ENCODE measurements at regions of chr14 and their contacts with region 1.

Region 1: DNA sequence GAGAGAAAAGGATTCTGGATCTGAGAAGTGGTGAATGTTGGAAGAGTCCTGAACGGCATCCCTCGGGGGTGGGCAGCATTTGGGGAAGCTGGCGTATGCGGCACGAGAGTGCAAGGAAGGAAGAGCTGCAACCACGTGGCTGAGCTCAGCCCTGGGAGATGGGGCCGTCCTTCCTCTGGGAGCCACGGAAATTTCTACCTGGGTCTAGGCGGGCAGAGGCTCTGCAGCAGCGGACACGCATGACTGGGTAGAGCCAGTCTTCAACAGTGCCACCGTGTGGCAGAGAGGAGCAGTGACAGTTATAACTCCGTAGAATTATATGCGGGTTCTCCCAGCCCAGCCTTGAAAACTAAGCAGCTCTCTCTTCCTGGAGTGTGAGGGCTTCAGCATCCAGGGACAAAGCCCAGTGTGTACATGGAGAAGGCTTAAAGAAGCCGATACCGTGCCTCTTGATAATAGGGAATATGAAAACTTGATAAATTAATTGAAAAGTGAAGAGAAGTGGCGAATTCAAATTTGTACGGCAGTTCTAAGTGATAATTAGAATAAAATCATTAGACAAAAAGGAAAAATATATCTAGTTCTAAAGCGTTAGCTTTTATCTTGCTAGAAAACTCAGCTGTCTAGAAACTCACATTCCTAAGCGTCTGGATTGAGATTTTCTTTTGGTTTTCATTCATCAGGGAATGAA is 82.9 kb upstream of the STXBP6 start:
- DNase-seq: peak; percentile 62 to 68 (median 64)
- ATAC-seq: peak; percentile 100
- H3K4me3 ChIP-seq: no peak overlapping the region
- H3K4me1 ChIP-seq: no peaks in the 10 kb centered on the region
- CTCF ChIP-seq: peak; percentile 63

Region 2: DNA sequence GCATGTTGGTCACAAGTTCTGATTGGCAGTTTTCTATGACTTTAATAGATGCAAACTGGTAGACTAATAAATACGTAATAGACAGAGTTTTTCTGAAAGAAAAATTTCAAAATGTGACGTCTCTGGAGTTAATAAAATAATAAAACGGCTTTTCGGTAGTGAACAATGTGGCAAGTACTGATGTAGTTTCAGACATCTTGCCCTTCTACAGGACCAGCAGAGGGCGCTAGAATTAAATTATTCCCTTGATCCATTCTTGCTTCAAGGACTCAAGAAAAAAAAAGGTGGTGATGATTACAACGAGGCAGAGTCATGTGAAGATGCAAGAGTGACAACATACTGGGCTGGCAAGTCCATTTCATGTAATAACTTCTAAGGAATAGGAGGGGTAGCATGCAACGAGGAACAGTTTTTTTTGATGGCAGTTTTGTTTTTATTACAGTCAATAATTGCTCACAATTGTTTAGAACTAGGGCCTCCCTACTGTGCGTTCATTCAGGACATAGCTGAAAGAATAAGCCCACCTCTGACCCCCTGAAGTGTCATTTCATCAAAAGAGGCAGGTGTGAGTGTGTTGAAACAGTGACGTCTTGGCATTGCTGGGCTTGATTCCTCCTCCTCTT is 397.9 kb before region 1 on chr14:
- intact Hi-C with region 1: loop called in 1 of 2 experiments (anchors 5 kb)
- DNase-seq: peak in 1 of 3 donors; percentile 81
- ATAC-seq: peak; percentile 75
- H3K4me3 ChIP-seq: no peak overlapping the region
- H3K4me1 ChIP-seq: no peaks in the 10 kb centered on the region
- CTCF ChIP-seq: peak; percentile 50

Region 3: GRCh38 chr14:24806061-24806678 is 326.7 kb before region 1 on chr14:
- intact Hi-C with region 1: loop called in 1 of 2 experiments (anchors 10 kb)
- DNase-seq: peak; percentile 67 to 96 (median 84)
- ATAC-seq: peak; percentile 94
- H3K4me3 ChIP-seq: no peak overlapping the region
- H3K4me1 ChIP-seq: peaks cover 4% of the 10 kb centered on the region
- CTCF ChIP-seq: peak; percentile 68

Region 4: GRCh38 chr14:24911324-24912109 is 221.4 kb before region 1 on chr14:
- intact Hi-C with region 1: no loop called
- DNase-seq: peak in 1 of 3 donors; percentile 60
- ATAC-seq: peak; percentile 64
- H3K4me3 ChIP-seq: no peak overlapping the region
- H3K4me1 ChIP-seq: peaks cover 6% of the 10 kb centered on the region
- CTCF ChIP-seq: no peak

Region 5: DNA sequence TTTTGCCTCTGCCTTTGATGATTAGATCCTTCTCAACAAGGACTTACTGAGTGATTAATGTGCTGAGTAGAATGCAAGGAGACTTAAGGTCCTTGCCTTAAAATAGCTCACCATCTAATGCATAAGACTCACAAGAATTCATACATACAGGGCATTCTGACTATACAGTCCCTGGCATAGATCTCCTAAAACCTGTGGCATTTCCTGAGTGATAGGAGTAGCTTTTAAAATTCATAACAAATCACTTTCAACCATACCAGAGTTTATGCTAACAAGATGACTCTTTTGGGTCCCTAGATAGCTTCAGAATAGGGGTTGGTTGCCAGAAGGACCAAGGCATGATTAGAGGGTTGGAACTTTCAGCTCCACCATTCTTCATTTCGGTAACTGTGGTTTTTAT is 131.7 kb before region 1 on chr14:
- intact Hi-C with region 1: no loop called
- DNase-seq: no peak
- ATAC-seq: no peak
- H3K4me3 ChIP-seq: no peak overlapping the region
- H3K4me1 ChIP-seq: no peaks in the 10 kb centered on the region
- CTCF ChIP-seq: no peak